IMR-90 (cell line): ENCODE measurements at regions of chr4 and their contacts with region 1.

Region 1: GRCh38 chr4:102843273-102843672 is 15.9 kb upstream of the UBE2D3 start:
- DNase-seq: no peak
- ATAC-seq: no peak
- H3K4me3 ChIP-seq: no peak overlapping the region
- H3K27ac ChIP-seq: no peak overlapping the region
- H3K4me1 ChIP-seq: no peaks in the 10 kb centered on the region
- H3K27me3 ChIP-seq: no peaks in the 10 kb centered on the region
- CTCF ChIP-seq: no peak
- POLR2A ChIP-seq: no peak
- RAD21 ChIP-seq: no peak

Region 2: GRCh38 chr4:102815981-102816380 is 27.3 kb before region 1 on chr4:
- CTCF ChIA-PET with region 1: no interaction called
- POLR2A ChIA-PET with region 1: interaction called, 10 read pairs
- dilution Hi-C with region 1: no loop called
- in situ Hi-C with region 1: no loop called
- intact Hi-C with region 1: no loop called
- DNase-seq: peak; percentile 95
- ATAC-seq: peak; percentile 84
- H3K4me3 ChIP-seq: no peak overlapping the region
- H3K27ac ChIP-seq: peak overlapping the region; percentile 31; the same call in 1 of the 2 replicates
- H3K4me1 ChIP-seq: peaks cover 6% of the 10 kb centered on the region; the same call in 1 of the 2 replicates
- H3K27me3 ChIP-seq: no peaks in the 10 kb centered on the region
- CTCF ChIP-seq: no peak
- POLR2A ChIP-seq: no peak
- RAD21 ChIP-seq: no peak